ENCODE measurements at regions of chr6 and their contacts with region 1.

Region 1: DNA sequence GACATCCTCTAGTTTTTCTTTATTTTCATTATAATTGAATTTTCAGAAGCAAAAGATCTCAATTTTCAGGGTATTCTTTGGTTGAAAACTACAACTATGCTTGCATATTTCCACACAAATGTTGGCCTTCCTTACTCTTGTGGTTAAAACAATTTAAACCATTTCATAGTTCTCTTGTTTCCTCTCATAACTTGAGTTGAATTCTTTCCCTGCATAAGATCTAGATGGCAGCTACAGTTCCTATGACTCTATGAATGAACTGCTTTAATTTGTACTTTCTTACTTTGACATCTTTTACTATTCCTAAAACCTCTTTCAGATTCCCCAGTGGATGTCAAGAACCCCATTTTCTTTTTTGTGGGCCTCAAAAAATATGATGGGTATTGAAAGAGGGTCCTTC is 564.5 kb downstream of the NKAIN2 start:
- DNase-seq: no peak
- H3K4me3 ChIP-seq: no peak overlapping the region
- H3K27ac ChIP-seq: no peak overlapping the region
- H3K4me1 ChIP-seq: no peaks in the 10 kb centered on the region
- H3K27me3 ChIP-seq: no peaks in the 10 kb centered on the region
- CTCF ChIP-seq: no peak

Region 2: GRCh38 chr6:124512431-124512830 is 144.3 kb after region 1 on chr6:
- CTCF ChIA-PET with region 1: no interaction called
- POLR2A ChIA-PET with region 1: interaction called, 11 read pairs
- intact Hi-C with region 1: no loop called
- DNase-seq: no peak
- H3K4me3 ChIP-seq: no peak overlapping the region
- H3K27ac ChIP-seq: no peak overlapping the region
- H3K4me1 ChIP-seq: no peaks in the 10 kb centered on the region
- H3K27me3 ChIP-seq: no peaks in the 10 kb centered on the region
- CTCF ChIP-seq: no peak

Measured in PC-9 (cell line).